ENCODE measurements at regions of chr14 and their contacts with region 1.

Region 1: GRCh38 chr14:102805371-102806246 is 28.4 kb downstream of the TRAF3 start:
- DNase-seq: peak in 5 of 9 donors; percentile 4 to 56 (median 10)
- ATAC-seq: peak; percentile 60
- H3K4me3 ChIP-seq: no peak overlapping the region
- H3K4me3 Mint-ChIP-seq: peak overlapping the region; percentile 27 to 84 (median 61)
- H3K27ac ChIP-seq: no peak overlapping the region
- H3K27ac Mint-ChIP-seq: peak overlapping the region; percentile 44 to 94 (median 78)
- H3K4me1 ChIP-seq: peaks cover 30 to 36% of the 10 kb centered on the region in 2 donors
- H3K4me1 Mint-ChIP-seq: peaks cover 45 to 72% (median 64%) of the 10 kb centered on the region in 7 donors
- H3K27me3 ChIP-seq: no peaks in the 10 kb centered on the region
- H3K27me3 Mint-ChIP-seq: no peaks in the 10 kb centered on the region

Region 2: DNA sequence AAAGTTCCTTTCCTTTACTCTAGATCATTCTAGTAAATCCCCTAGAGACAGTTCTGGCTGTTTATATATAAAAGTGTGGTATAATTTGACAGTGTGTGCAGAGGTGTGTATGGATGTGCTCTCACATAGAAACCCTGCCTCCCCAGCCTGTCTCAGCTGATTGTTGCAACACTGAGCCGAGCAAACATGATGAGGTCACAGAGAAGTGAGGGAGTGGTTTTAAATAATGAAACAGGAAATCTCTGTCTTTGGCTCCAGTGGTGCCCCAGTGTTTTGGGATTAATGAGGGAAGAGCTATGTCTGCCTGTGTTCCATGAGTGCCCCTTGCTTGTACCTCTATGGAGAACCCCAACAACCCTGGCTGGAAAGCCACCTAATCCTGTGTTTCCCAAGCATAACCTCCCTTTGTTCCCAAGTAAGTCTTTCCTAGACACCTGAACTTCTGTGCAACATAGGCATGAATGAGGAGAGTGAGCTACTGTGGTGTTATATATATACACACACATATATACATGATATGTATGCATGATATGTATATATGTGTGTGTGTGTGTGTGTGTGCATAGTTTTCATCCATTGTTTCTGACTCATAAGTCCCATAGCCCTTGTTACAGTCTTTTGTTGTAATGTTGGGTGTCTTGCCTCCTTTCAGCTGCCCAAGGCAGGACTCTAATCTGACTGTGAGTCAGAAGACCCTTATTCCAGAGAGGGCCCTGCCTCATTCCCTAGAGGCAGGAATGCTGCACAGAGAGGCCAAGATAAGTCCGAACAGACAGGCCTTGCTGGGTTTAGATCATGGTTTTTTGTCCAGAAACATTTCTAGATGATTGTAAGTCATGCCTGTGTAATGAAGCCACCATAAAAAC is 10.3 kb before region 1 on chr14:
- CTCF ChIA-PET with region 1: no interaction called
- POLR2A ChIA-PET with region 1: no interaction called
- intact Hi-C with region 1: loop called in 1 of 2 experiments (anchors 1 kb)
- DNase-seq: peak in 4 of 9 donors; percentile 29 to 49 (median 42)
- ATAC-seq: peak; percentile 86
- H3K4me3 ChIP-seq: no peak overlapping the region
- H3K4me3 Mint-ChIP-seq: peak overlapping the region in 7 of 10 donors; percentile 16 to 66 (median 43)
- H3K27ac ChIP-seq: peak overlapping the region; percentile 9
- H3K27ac Mint-ChIP-seq: peak overlapping the region; percentile 42 to 93 (median 85)
- H3K4me1 ChIP-seq: peaks cover 12 to 30% of the 10 kb centered on the region in 2 donors
- H3K4me1 Mint-ChIP-seq: peaks cover 40 to 83% (median 66%) of the 10 kb centered on the region in 7 donors
- H3K27me3 ChIP-seq: no peaks in the 10 kb centered on the region
- H3K27me3 Mint-ChIP-seq: no peaks in the 10 kb centered on the region

Region 3: GRCh38 chr14:102819176-102819628 is 13.6 kb after region 1 on chr14:
- CTCF ChIA-PET with region 1: interaction called, 3 read pairs
- POLR2A ChIA-PET with region 1: no interaction called
- intact Hi-C with region 1: loop called in 1 of 2 experiments (anchors 2 kb)
- DNase-seq: peak in 1 of 9 donors; percentile 71
- ATAC-seq: peak; percentile 78
- H3K4me3 ChIP-seq: peak overlapping the region; percentile 34
- H3K4me3 Mint-ChIP-seq: peak overlapping the region in 6 of 10 donors; percentile 2 to 81 (median 45)
- H3K27ac ChIP-seq: no peak overlapping the region
- H3K27ac Mint-ChIP-seq: peak overlapping the region; percentile 5 to 91 (median 33)
- H3K4me1 ChIP-seq: peaks cover 16 to 27% of the 10 kb centered on the region in 2 donors
- H3K4me1 Mint-ChIP-seq: peaks cover 56 to 90% (median 76%) of the 10 kb centered on the region in 7 donors
- H3K27me3 ChIP-seq: no peaks in the 10 kb centered on the region
- H3K27me3 Mint-ChIP-seq: no peaks in the 10 kb centered on the region

Region 4: GRCh38 chr14:102849526-102850379 is 44.1 kb after region 1 on chr14:
- CTCF ChIA-PET with region 1: no interaction called
- POLR2A ChIA-PET with region 1: no interaction called
- intact Hi-C with region 1: loop called in 1 of 2 experiments (anchors 5 kb)
- DNase-seq: no peak
- ATAC-seq: no peak
- H3K4me3 ChIP-seq: no peak overlapping the region
- H3K4me3 Mint-ChIP-seq: no peak overlapping the region
- H3K27ac ChIP-seq: no peak overlapping the region
- H3K27ac Mint-ChIP-seq: peak overlapping the region in 7 of 9 donors; percentile 18 to 82 (median 51)
- H3K4me1 ChIP-seq: no peaks in the 10 kb centered on the region
- H3K4me1 Mint-ChIP-seq: peaks cover 6 to 24% (median 19%) of the 10 kb centered on the region in 7 donors
- H3K27me3 ChIP-seq: no peaks in the 10 kb centered on the region
- H3K27me3 Mint-ChIP-seq: no peaks in the 10 kb centered on the region

Region 5: DNA sequence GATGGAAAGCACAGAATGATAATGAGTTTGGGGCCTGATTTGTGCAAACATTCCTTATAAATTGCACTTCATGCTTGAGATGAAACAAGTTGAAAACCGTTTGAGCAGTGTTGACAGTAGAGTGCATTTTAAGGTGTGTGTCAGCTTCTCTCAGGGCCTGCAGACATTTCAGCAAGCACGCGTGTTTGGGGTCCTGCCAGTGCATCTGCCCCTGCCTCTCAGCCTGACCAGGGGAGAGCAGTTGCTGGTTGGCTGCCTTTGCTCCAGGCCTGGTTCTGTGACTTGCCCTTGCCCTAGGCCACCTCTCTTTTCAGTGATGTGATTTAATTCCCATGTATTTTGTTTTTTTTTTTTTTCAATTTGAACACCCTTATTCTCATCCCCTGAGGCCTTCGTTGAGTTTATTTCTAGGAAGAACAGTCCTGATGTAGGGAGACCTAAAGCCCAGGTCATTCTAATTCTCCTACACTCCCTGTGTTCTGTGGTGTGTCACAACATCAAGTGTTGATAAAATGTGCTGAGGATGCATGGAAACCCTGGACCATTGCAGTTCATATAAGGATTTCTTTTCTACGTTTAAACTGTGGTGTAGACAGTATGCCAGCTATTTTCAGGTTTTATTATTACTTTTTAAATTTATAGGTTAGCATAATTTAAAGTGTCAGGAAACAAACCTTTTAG is 76.8 kb after region 1 on chr14:
- CTCF ChIA-PET with region 1: no interaction called
- POLR2A ChIA-PET with region 1: no interaction called
- intact Hi-C with region 1: no loop called
- DNase-seq: no peak
- ATAC-seq: no peak
- H3K4me3 ChIP-seq: no peak overlapping the region
- H3K4me3 Mint-ChIP-seq: no peak overlapping the region
- H3K27ac ChIP-seq: no peak overlapping the region
- H3K27ac Mint-ChIP-seq: peak overlapping the region in 5 of 9 donors; percentile 1 to 68 (median 27)
- H3K4me1 ChIP-seq: no peaks in the 10 kb centered on the region
- H3K4me1 Mint-ChIP-seq: peaks cover 0 to 17% (median 0%) of the 10 kb centered on the region in 7 donors
- H3K27me3 ChIP-seq: no peaks in the 10 kb centered on the region
- H3K27me3 Mint-ChIP-seq: no peaks in the 10 kb centered on the region

Region 6: GRCh38 chr14:103213331-103213730 is 407.7 kb after region 1 on chr14:
- CTCF ChIA-PET with region 1: no interaction called
- POLR2A ChIA-PET with region 1: no interaction called
- intact Hi-C with region 1: no loop called
- DNase-seq: no peak
- ATAC-seq: no peak
- H3K4me3 ChIP-seq: no peak overlapping the region
- H3K4me3 Mint-ChIP-seq: no peak overlapping the region
- H3K27ac ChIP-seq: no peak overlapping the region
- H3K27ac Mint-ChIP-seq: no peak overlapping the region
- H3K4me1 ChIP-seq: no peaks in the 10 kb centered on the region
- H3K4me1 Mint-ChIP-seq: peaks cover 0 to 5% (median 0%) of the 10 kb centered on the region in 7 donors
- H3K27me3 ChIP-seq: no peaks in the 10 kb centered on the region
- H3K27me3 Mint-ChIP-seq: peaks cover 33 to 69% (median 54%) of the 10 kb centered on the region in 5 donors